Activated CD4-positive, alpha-beta T cell treated with anti-CD3 and anti-CD28 coated beads, Interleukin-2, amount 10 ng/mL, durations not matched to agents 24 days and 14 days (primary cell): ENCODE measurements at regions of chr9 and their contacts with region 1.

Region 1: GRCh38 chr9:136885950-136886578 is at the start of gene TRAF2:
- DNase-seq: peak; percentile 99
- H3K4me3 Mint-ChIP-seq: peak within 1 kb of the TSS; percentile 100
- H3K27ac Mint-ChIP-seq: peak within 1 kb of the TSS; percentile 95
- H3K4me1 Mint-ChIP-seq: peaks cover 37% of the 10 kb centered on the region
- H3K27me3 Mint-ChIP-seq: no peaks in the 10 kb centered on the region
- total RNA-seq, gene TRAF2: 61.6 and 66.6 TPM in 2 replicates

Region 2: GRCh38 chr9:136527721-136528691 is 358.1 kb before region 1 on chr9:
- intact Hi-C with region 1: no loop called
- DNase-seq: peak; percentile 64
- H3K4me3 Mint-ChIP-seq: no peak overlapping the region
- H3K27ac Mint-ChIP-seq: no peak overlapping the region
- H3K4me1 Mint-ChIP-seq: peaks cover 12% of the 10 kb centered on the region
- H3K27me3 Mint-ChIP-seq: no peaks in the 10 kb centered on the region

Region 3: GRCh38 chr9:136545966-136546698 is 339.9 kb before region 1 on chr9 and contains the start of gene NOTCH1:
- intact Hi-C with region 1: loop called (anchors 2 kb)
- DNase-seq: peak; percentile 96
- H3K4me3 Mint-ChIP-seq: peak within 1 kb of the TSS; percentile 95
- H3K27ac Mint-ChIP-seq: peak within 1 kb of the TSS; percentile 94
- H3K4me1 Mint-ChIP-seq: peaks cover 13% of the 10 kb centered on the region
- H3K27me3 Mint-ChIP-seq: no peaks in the 10 kb centered on the region
- total RNA-seq, gene NOTCH1: 108 and 113 TPM in 2 replicates

Region 4: GRCh38 chr9:136578915-136579649 is 307.0 kb before region 1 on chr9:
- intact Hi-C with region 1: no loop called
- DNase-seq: no peak
- H3K4me3 Mint-ChIP-seq: no peak overlapping the region
- H3K27ac Mint-ChIP-seq: no peak overlapping the region
- H3K4me1 Mint-ChIP-seq: peaks cover 2% of the 10 kb centered on the region
- H3K27me3 Mint-ChIP-seq: no peaks in the 10 kb centered on the region

Region 5: DNA sequence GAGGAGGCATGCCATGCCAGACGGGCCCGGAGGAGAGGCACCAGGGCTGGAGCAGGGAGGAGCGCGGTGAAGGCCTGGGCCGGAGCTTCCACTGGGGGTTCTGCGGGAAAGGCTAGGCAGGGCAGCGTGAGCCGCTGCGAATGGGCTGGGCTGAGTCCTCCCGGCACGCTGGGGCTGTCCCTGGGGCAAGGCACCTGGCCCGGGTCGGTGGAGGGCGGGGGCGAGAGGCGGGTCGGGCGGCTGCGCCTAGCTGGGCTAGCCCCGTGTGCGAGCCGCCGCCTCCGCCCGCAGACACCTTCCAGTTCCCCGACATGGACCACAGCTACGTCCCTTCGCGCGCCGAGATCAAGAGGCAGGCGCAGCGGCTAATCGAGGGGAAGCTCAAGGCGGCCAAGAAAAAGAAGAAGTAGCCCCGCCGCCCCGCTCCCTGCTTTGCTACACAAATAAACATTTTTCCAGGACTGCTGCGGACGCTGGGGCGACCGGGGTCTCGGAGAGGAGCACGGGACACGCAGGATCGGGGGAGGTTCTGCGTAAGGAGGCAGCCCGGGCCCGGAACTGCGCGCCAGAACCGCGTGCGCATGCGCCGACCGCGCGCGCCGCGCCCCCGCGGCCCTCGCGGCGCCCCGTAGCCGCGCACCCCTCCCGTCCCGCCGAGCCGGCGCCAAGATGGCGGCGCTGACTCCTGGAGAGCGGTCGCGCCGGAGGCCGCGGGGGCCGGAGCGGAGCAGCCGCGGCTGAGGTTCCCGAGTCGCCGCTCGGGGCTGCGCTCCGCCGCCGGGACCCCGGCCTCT is 78.6 kb before region 1 on chr9 and contains the start of gene RABL6:
- intact Hi-C with region 1: loop called (anchors 10 kb)
- DNase-seq: peak; percentile 96
- H3K4me3 Mint-ChIP-seq: peak within 1 kb of the TSS; percentile 91
- H3K27ac Mint-ChIP-seq: peak within 1 kb of the TSS; percentile 93
- H3K4me1 Mint-ChIP-seq: peaks cover 36% of the 10 kb centered on the region
- H3K27me3 Mint-ChIP-seq: no peaks in the 10 kb centered on the region
- total RNA-seq, gene RABL6: 116 and 119 TPM in 2 replicates

Region 6: GRCh38 chr9:136865735-136866103 is 20.3 kb before region 1 on chr9:
- intact Hi-C with region 1: loop called (anchors 1 kb)
- DNase-seq: no peak
- H3K4me3 Mint-ChIP-seq: peak overlapping the region; percentile 90
- H3K27ac Mint-ChIP-seq: peak overlapping the region; percentile 89
- H3K4me1 Mint-ChIP-seq: peaks cover 19% of the 10 kb centered on the region
- H3K27me3 Mint-ChIP-seq: no peaks in the 10 kb centered on the region

Region 7: GRCh38 chr9:136902259-136902821 is 16.3 kb after region 1 on chr9:
- intact Hi-C with region 1: loop called (anchors 1 kb)
- DNase-seq: peak; percentile 97
- H3K4me3 Mint-ChIP-seq: peak overlapping the region; percentile 78
- H3K27ac Mint-ChIP-seq: peak overlapping the region; percentile 99
- H3K4me1 Mint-ChIP-seq: peaks cover 48% of the 10 kb centered on the region
- H3K27me3 Mint-ChIP-seq: no peaks in the 10 kb centered on the region

Region 8: DNA sequence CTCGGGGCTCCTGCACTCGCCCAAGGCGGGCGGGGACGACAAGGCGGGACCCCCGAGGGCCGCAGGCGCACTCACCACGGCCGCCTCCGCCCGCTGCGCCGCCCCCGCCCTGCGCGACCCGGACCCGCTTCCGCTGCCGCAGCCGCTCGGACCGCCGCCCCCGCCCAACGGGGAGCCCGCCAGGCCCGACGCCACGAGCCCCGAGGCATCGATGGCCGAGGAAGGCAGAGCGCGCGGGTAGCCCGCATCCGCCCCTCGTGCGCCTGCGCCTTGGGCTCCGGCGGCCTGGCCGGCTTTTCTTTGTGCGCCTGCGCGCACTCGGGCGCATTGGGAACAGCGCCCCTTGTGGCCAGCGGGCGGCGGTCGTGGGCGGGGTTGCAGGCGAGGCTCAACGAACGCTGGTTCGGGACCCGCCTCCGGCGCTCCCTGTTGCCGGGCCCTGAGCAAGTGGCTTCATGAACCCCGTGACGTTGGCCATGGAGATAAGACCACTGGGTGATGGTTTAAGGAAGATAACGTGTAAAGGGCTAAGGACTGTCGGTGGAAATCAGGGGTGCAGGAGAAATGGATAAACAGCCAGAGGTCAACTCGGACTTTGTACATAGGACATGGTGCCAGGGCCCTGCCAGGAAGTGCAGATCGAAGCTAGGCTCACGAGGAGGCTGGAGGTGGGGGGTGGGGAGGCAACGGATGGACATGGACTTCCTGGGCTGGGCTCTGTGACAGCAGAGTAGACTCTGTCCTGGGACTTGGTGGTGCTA is 58.6 kb after region 1 on chr9 and contains the starts of genes C8G and FBXW5:
- intact Hi-C with region 1: loop called (anchors 1 kb)
- DNase-seq: peak; percentile 99
- H3K4me3 Mint-ChIP-seq: peak within 1 kb of the TSS; percentile 83
- H3K27ac Mint-ChIP-seq: peak within 1 kb of the TSS; percentile 87
- H3K4me1 Mint-ChIP-seq: peaks cover 3% of the 10 kb centered on the region
- H3K27me3 Mint-ChIP-seq: no peaks in the 10 kb centered on the region
- total RNA-seq, gene C8G: 0.69 and 1.7 TPM in 2 replicates
- total RNA-seq, gene FBXW5: 92.7 and 93.6 TPM in 2 replicates

Region 9: DNA sequence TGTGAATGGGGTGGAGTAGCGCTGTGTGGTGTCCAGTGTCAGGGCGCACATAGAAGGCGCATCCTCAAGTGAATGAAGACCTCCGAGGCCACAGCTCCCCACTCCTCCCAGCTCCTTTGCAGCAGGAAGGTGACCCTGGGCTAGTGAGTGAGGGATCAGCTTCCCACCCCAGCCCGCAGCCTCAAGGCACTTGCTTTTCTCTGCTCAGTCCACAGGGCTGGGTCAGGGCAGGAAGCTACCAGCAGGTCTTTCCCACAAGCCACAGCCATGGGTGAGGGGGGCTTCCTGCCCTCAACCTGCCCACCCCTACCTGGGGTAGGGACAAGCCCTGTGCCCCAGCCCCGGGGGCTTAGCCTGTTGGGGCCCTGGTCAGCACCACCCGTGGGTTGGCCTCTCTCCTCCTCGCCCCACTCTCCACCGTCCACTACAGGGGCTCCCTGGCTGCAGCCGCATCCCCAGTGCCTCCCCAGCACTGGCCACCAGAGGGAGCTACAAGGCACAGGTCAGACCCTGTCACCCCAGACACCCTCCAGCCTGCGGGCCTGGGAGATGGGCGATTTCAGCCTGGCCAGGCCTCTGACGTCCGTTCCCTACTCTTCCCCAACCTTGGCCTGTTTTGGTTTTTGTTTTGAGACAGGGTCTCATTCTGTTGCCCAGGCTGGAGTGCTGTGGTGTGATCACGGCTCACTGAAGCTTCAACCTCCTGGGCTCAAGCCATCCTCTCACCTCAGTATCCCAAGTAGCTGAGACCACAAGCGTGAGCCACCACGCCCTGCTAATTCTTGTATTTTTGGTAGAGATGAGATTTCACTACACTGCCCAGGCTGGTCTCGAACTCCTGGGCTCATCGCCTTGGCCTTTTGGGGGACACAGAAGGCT is 143.2 kb after region 1 on chr9:
- intact Hi-C with region 1: no loop called
- DNase-seq: peak; percentile 92
- H3K4me3 Mint-ChIP-seq: peak overlapping the region; percentile 77
- H3K27ac Mint-ChIP-seq: peak overlapping the region; percentile 67
- H3K4me1 Mint-ChIP-seq: peaks cover 37% of the 10 kb centered on the region
- H3K27me3 Mint-ChIP-seq: peaks cover 3% of the 10 kb centered on the region

Region 10: DNA sequence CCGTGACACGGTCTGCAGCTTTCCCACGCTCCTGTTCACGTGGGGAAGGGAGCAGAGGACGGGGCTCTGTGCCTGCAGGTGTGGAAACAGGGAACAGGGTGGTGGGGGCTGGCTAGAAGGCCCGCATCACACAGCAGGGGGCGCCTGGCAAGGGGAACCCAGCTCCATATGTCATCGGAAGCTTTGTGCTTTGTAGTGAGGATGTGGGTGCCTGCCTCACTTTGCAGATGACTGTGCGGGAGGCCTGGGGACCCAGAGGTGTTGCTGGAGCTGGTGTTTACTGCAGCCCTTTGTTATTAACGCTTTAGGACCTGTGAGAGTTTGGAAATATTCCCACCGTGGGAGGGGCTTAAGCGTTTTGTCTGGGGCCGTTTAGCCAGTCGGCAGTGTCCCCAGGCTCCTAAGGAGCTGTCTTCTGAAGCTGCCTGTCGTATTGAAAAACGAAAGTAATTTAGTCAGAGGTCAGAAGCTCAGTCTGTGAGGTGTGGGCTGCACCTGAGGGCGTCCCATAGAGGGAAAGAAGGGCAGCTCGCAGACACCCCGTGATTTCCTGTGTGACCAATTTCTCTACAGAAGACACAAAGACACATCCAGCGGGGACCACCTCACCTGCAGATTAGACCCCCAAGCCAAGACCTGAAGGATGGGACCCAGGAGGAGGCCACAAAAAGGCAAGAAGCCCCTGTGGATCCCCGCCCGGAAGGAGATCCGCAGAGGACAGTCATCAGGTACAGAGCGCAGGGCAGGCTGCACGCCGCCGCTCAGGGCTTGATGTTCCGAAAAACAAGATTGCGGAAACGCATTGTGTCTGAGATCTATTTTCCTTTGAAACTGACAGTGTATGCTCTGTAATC is 209.8 kb after region 1 on chr9:
- intact Hi-C with region 1: no loop called
- DNase-seq: peak; percentile 96
- H3K4me3 Mint-ChIP-seq: peak overlapping the region; percentile 78
- H3K27ac Mint-ChIP-seq: peak overlapping the region; percentile 91
- H3K4me1 Mint-ChIP-seq: peaks cover 17% of the 10 kb centered on the region
- H3K27me3 Mint-ChIP-seq: no peaks in the 10 kb centered on the region